Sciatic nerve (tissue), 2 donors: ENCODE measurements at regions of chr21 and their contacts with region 1.

Region 1: DNA sequence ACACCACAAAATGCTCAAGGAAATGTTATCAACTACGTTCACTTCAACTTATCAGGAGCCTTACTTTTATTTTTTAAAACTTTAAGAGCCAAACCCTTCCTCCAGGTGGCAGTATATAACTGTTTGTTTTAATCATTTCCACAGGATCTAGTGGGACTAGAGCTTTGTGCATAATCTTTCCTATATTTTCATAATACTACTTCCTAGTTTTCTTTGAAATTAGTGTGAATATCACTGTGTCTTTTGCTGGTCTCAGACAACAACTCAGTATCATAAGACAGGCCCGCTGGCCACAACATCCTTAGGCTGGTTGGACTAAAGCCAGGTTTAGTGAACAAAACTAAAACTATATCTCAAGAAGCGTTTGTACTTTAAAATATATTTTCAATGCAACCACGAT is 145.5 kb downstream of the TIAM1 start:
- DNase-seq: no peak
- ATAC-seq: peak; percentile 41

Region 2: DNA sequence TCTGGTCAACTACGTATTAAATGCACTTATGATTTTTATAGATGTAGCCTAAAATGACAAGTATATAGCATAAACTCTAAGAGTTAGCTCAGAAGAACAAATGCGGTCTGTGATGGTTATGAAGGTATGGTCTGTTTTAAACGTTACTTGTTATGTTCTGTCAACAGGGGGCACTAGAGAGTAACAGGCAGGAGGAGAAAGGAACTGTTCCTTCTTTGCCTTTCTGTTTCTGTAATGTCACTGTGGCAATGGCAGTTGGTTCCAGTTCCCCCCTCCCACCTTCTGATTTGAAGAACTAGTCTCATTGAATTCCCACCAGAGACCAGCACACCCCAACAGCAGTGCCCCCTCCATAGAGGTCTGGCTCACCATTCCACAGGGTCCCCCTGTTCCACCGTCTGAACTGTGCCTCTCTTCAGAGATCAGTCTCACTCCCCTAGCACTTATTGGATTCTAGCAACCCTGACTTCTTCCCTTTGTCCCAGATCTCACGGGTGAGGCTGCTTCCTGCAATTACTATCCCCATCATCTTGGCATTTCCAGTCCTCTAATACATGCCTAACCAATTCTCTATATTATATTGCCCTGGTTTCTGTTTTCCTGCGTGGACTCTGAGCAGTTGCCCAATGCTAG is 929.9 kb before region 1 on chr21:
- intact Hi-C with region 1: no loop called
- DNase-seq: no peak
- ATAC-seq: no peak

Region 3: GRCh38 chr21:30447056-30447455 is 751.5 kb before region 1 on chr21:
- intact Hi-C with region 1: loop called (anchors 5 kb)
- DNase-seq: no peak
- ATAC-seq: no peak

Region 4: GRCh38 chr21:31161157-31161556 is 37.4 kb before region 1 on chr21:
- intact Hi-C with region 1: no loop called
- DNase-seq: no peak
- ATAC-seq: peak; percentile 79

Region 5: DNA sequence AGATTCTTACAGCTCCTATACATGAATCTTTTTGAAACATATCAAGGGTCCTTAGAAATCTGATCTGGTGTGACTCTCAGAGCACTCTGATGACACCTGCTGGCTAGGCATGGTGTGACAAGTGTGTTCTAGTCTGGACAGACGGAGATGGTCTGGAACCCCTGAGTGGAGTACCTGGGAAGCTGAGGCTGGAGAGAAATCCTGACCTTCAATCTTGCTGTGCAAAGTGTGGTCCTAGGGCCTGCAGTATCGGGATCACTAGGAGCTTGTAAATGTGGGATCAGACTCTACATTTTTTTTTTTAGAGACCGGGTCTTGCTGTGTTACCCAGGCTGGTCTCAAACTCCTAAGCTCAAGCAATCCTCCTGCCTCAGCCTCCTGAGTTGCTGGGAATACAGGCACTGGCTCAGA is 382.3 kb after region 1 on chr21:
- intact Hi-C with region 1: loop called (anchors 10 kb)
- DNase-seq: peak; percentile 87
- ATAC-seq: peak; percentile 86